ENCODE measurements at regions of chr9 and their contacts with region 1.

Region 1: GRCh38 chr9:16344343-16344742 is 526.1 kb downstream of the BNC2 start:
- DNase-seq: no peak
- ATAC-seq: peak in 6 of 8 donors; percentile 9 to 65 (median 35)
- H3K4me3 ChIP-seq: no peak overlapping the region
- H3K27ac ChIP-seq: peak overlapping the region in 5 of 10 donors; percentile 31 to 82 (median 52)
- H3K4me1 ChIP-seq: peaks cover 4 to 27% (median 13%) of the 10 kb centered on the region in 9 donors
- H3K27me3 ChIP-seq: no peaks in the 10 kb centered on the region
- CTCF ChIP-seq: no peak

Region 2: GRCh38 chr9:16207161-16207560 is 137.2 kb before region 1 on chr9:
- intact Hi-C with region 1: loop called in 1 of 10 experiments (anchors 10 kb)
- DNase-seq: peak; percentile 34 to 36
- ATAC-seq: peak in 7 of 8 donors; percentile 50 to 73 (median 64)
- H3K4me3 ChIP-seq: no peak overlapping the region
- H3K27ac ChIP-seq: peak overlapping the region in 3 of 10 donors; percentile 19 to 39 (median 29)
- H3K4me1 ChIP-seq: peaks cover 0 to 15% (median 0%) of the 10 kb centered on the region in 9 donors
- H3K27me3 ChIP-seq: no peaks in the 10 kb centered on the region
- CTCF ChIP-seq: no peak

Region 3: DNA sequence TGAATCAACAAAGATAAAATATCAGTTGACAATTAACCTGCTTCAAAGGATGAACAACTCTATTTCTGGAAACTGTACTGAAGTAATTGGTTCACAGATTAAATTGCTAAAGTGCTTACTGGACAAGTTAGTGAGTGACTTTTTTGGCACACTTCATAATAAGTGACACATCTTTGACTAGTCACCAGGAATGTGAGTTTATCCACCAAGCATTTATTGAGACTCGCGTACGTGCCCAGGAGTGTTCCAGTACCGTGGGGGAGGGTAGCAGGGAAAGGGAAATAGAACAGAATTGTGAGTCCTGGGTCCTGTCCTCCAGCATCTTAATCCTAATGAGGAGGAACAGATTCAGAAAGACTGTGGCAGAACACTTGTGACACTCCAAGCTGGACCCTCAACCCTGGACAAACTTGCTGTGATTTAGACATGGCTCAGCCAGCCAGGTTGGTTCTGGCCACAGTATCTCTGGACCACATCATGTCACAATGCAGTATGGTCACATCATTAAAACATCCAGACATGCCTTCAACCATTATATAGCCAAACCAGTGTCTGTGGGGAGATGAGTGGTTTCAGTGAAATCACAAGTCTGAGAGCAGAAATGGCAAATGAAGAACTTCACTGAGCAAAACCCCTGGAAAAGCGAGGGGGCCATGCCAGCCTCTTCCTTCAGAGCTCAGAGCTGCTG is 97.0 kb before region 1 on chr9:
- intact Hi-C with region 1: loop called in 1 of 10 experiments (anchors 10 kb)
- DNase-seq: no peak
- ATAC-seq: peak in 3 of 8 donors; percentile 55 to 80 (median 57)
- H3K4me3 ChIP-seq: no peak overlapping the region
- H3K27ac ChIP-seq: peak overlapping the region in 1 of 10 donors; percentile 59
- H3K4me1 ChIP-seq: peaks cover 0 to 15% (median 10%) of the 10 kb centered on the region in 9 donors
- H3K27me3 ChIP-seq: no peaks in the 10 kb centered on the region
- CTCF ChIP-seq: no peak

Region 4: GRCh38 chr9:16289639-16290038 is 54.7 kb before region 1 on chr9:
- intact Hi-C with region 1: loop called in 1 of 10 experiments (anchors 10 kb)
- DNase-seq: no peak
- ATAC-seq: peak in 5 of 8 donors; percentile 23 to 76 (median 67)
- H3K4me3 ChIP-seq: no peak overlapping the region
- H3K27ac ChIP-seq: no peak overlapping the region
- H3K4me1 ChIP-seq: peaks cover 0 to 12% (median 0%) of the 10 kb centered on the region in 9 donors
- H3K27me3 ChIP-seq: peaks cover 0 to 4% (median 0%) of the 10 kb centered on the region in 7 donors
- CTCF ChIP-seq: no peak

Region 5: GRCh38 chr9:16637218-16637617 is 292.9 kb after region 1 on chr9:
- intact Hi-C with region 1: no loop called
- DNase-seq: no peak
- ATAC-seq: no peak
- H3K4me3 ChIP-seq: no peak overlapping the region
- H3K27ac ChIP-seq: no peak overlapping the region
- H3K4me1 ChIP-seq: no peaks in the 10 kb centered on the region
- H3K27me3 ChIP-seq: no peaks in the 10 kb centered on the region
- CTCF ChIP-seq: no peak